ENCODE measurements at regions of chr1 and their contacts with region 1.

Region 1: GRCh38 chr1:65459397-65459768 is 38.9 kb downstream of the LEPR start:
- DNase-seq: no peak
- H3K4me3 ChIP-seq: no peak overlapping the region
- H3K27ac ChIP-seq: no peak overlapping the region
- H3K4me1 ChIP-seq: peaks cover 0 to 4% (median 1%) of the 10 kb centered on the region in 4 experiments; a peak in 2 of 7 replicates
- H3K27me3 ChIP-seq: no peaks in the 10 kb centered on the region
- CTCF ChIP-seq: peak in 2 of 3 experiments; percentile 62 to 74; a peak in 3 of 4 replicates
- EP300 ChIP-seq: no peak
- POLR2A ChIP-seq: no peak
- RAD21 ChIP-seq: peak; percentile 70 to 80

Region 2: DNA sequence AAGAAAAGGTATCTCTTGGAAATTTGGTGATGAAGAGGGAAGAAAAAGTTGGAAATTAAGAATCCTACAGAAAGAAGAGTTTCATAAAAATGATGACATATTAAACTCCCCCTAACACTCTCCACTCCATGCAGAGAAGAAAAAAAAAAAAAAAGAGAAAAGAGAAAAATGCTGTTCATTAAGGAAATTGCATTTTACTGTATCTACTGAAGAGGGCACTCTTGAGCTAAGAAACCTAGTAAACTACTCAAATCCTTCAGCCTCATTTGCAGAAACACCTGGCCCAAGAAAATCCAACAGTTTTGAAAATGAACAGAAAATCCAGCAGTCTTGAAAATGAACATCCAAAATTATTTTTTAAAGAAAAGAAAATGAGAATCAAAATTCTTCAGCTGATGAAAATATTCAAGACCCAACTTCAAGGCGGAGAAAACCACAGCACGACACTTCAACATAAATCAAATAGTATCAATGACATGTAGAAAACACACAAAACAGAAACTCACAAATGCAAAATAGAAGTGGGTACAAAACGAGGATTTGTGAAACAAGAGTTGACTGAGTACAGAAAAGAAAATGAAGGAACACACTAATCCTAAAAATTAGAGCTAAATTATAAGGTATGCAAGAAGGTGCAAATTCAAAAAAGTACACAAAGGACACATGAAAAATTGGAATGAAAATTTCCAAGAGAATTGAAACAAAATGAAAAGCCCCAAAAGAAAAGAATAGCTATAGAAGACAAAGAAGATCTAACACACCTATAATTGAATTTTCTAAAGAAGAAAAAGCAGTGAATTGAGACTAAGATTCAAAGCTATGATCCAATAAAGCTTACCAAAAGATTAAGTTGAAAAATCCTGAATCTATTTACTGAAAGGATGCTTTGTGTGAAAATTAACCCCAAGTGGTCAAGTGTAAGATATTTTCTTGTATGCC is 223.2 kb before region 1 on chr1:
- CTCF ChIA-PET with region 1: interaction called, 19 read pairs
- POLR2A ChIA-PET with region 1: no interaction called
- DNase-seq: no peak
- H3K4me3 ChIP-seq: no peak overlapping the region
- H3K27ac ChIP-seq: no peak overlapping the region
- H3K4me1 ChIP-seq: no peaks in the 10 kb centered on the region
- H3K27me3 ChIP-seq: no peaks in the 10 kb centered on the region
- CTCF ChIP-seq: peak in 2 of 3 experiments; percentile 55 to 65; a peak in 3 of 4 replicates
- EP300 ChIP-seq: no peak
- POLR2A ChIP-seq: no peak
- RAD21 ChIP-seq: peak; percentile 87 to 88

Region 3: GRCh38 chr1:65309304-65310077 is 149.9 kb before region 1 on chr1 and contains the start of gene DNAJC6:
- CTCF ChIA-PET with region 1: interaction called, 10 read pairs
- POLR2A ChIA-PET with region 1: no interaction called
- DNase-seq: peak; percentile 44 to 93
- H3K4me3 ChIP-seq: peak within 1 kb of the TSS; percentile 61 to 88 (median 64)
- H3K27ac ChIP-seq: no peak within 1 kb of the TSS
- H3K4me1 ChIP-seq: peaks cover 0 to 6% (median 2%) of the 10 kb centered on the region in 4 experiments; a peak in 3 of 7 replicates
- H3K27me3 ChIP-seq: peaks cover 0 to 10% (median 0%) of the 10 kb centered on the region in 4 experiments; a peak in 2 of 7 replicates
- CTCF ChIP-seq: no peak
- EP300 ChIP-seq: peak in 1 of 2 experiments; percentile 27; a peak in 1 of 3 replicates
- POLR2A ChIP-seq: no peak
- RAD21 ChIP-seq: 0 out of 4 replicates have a peak, but pooled peaks of 1 of the 2 experiments have one; percentile 8
- total RNA-seq, gene DNAJC6: 3.0 and 3.7 TPM in 2 replicates

Region 4: DNA sequence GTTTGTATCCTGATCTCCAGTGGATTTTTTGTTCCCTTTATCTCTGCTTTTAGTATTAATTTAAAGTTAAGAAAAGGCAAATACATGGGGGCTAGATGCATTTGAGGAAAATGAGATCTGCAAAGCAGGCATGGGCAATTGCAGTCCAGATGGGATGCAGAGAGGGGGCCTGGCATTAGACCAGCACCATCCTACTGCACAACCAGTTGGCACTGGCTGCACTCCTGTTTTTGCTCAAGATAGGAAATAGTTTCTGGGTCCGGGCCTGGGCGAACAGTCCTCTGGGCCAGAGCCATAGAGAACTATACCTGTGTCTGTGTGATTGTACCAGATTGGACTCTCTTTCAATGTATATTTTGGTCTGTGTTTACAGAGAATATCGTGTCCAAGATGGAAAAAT is 72.9 kb before region 1 on chr1:
- CTCF ChIA-PET with region 1: no interaction called
- POLR2A ChIA-PET with region 1: no interaction called
- DNase-seq: no peak
- H3K4me3 ChIP-seq: no peak overlapping the region
- H3K27ac ChIP-seq: no peak overlapping the region
- H3K4me1 ChIP-seq: no peaks in the 10 kb centered on the region
- H3K27me3 ChIP-seq: no peaks in the 10 kb centered on the region
- CTCF ChIP-seq: no peak
- EP300 ChIP-seq: no peak
- POLR2A ChIP-seq: no peak
- RAD21 ChIP-seq: no peak

Region 5: DNA sequence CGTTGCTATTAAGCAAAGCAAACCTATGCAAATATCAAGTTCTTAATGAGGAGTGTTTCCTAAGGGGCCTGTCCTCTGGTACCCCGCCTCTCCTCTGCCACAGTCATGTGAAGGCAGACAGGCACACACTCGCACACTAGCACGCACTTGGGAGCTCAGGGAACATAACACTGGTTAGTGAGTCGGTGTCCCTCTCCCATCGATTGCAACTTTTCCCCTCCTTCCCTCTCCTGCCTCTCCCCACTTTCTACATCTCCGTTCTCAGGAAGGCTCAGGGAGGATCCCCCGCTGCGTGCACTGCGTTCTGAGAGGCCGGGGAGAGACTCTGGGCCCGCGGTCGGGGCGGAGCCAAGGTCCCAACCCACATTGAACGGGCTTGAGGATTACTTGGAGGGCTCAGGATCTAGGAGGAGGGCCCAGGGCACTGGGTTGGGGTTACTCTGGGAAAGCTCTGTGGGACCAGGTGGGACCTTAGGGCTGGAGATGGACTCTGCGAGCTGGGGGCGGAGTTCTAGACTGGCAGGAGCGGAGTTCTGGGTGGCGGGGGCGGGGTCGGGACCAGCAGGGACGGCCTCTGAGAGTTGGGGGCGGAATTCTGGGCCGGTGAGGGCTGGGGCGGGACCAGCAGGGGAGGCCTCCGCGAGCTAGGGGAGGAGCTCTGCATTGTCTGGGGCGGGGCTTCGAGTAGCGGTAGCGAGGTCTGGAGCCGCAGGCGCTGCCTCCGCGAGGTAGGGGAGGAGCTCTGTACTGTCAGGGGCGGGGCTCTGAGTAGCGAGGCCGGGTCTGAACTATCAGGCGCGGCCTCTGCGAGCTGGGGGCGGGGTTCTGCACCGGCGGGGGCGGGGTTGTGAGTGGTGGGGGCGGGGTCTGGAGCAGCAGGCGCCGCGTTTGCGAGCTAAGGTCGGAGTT is 39.4 kb before region 1 on chr1:
- CTCF ChIA-PET with region 1: interaction called, 10 read pairs
- POLR2A ChIA-PET with region 1: no interaction called
- DNase-seq: peak; percentile 91 to 98
- H3K4me3 ChIP-seq: peak overlapping the region; percentile 81 to 94 (median 87)
- H3K27ac ChIP-seq: peak overlapping the region; percentile 46; the same call in 1 of the 2 replicates
- H3K4me1 ChIP-seq: peaks cover 0 to 18% (median 10%) of the 10 kb centered on the region in 4 experiments; a peak in 5 of 7 replicates
- H3K27me3 ChIP-seq: no peaks in the 10 kb centered on the region
- CTCF ChIP-seq: peak in 1 of 3 experiments; percentile 6; a peak in 1 of 4 replicates
- EP300 ChIP-seq: no peak
- POLR2A ChIP-seq: 0 out of 3 replicates have a peak, but pooled peaks of 1 of the 2 experiments have one; percentile 31
- RAD21 ChIP-seq: peak in 1 of 2 experiments; percentile 22; a peak in 1 of 4 replicates

Region 6: GRCh38 chr1:65431111-65431705 is 28.2 kb before region 1 on chr1:
- CTCF ChIA-PET with region 1: interaction called, 58 read pairs
- POLR2A ChIA-PET with region 1: interaction called, 3 read pairs
- DNase-seq: no peak
- H3K4me3 ChIP-seq: no peak overlapping the region
- H3K27ac ChIP-seq: no peak overlapping the region
- H3K4me1 ChIP-seq: peaks cover 2 to 14% (median 9%) of the 10 kb centered on the region in 4 experiments; a peak in 5 of 7 replicates
- H3K27me3 ChIP-seq: no peaks in the 10 kb centered on the region
- CTCF ChIP-seq: peak in 2 of 3 experiments; percentile 40 to 58; a peak in 2 of 4 replicates
- EP300 ChIP-seq: no peak
- POLR2A ChIP-seq: no peak
- RAD21 ChIP-seq: peak; percentile 70 to 74

Region 7: DNA sequence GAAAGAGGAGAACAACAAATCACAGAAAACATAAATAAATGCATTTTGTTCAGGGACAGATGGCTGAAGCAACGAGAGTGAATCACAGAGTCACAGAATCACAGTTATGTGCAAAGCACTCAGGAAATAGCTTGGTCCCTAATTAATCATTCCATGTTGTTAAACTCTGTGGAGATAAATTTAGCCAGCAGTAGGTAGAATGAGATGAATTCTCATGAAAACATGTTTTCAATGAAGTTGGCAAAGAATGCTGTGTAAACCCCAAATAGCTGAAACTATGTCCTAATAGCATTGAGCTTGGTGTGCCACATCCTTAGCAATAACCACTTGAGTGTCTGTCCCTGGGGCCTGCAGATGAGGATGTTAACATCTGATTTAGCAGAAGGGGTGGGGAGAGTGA is 18.5 kb before region 1 on chr1:
- CTCF ChIA-PET with region 1: interaction called, 27 read pairs
- POLR2A ChIA-PET with region 1: interaction called, 3 read pairs
- DNase-seq: no peak
- H3K4me3 ChIP-seq: no peak overlapping the region
- H3K27ac ChIP-seq: no peak overlapping the region
- H3K4me1 ChIP-seq: peaks cover 0 to 11% (median 7%) of the 10 kb centered on the region in 4 experiments; a peak in 5 of 7 replicates
- H3K27me3 ChIP-seq: no peaks in the 10 kb centered on the region; a peak in 1 of 7 replicates
- CTCF ChIP-seq: no peak
- EP300 ChIP-seq: no peak
- POLR2A ChIP-seq: no peak
- RAD21 ChIP-seq: no peak

Region 8: DNA sequence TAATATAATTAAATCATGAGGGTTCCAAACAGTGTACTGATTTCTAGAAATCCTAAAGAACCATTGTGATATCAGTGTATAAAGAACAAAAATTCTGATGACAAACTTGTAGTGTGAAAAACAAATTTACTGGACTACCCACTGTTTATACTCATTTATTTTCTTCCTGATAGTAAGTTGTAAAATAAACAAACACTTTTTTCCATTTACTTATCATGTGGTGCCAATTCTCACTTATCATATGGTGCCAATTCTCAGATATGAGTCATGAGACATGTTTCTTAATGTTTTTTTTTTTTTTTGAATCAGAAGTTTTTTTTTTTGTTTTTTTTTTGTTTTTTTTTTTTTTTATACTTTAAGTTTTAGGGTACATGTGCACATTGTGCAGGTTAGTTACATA is 98.8 kb after region 1 on chr1:
- CTCF ChIA-PET with region 1: no interaction called
- POLR2A ChIA-PET with region 1: no interaction called
- DNase-seq: no peak
- H3K4me3 ChIP-seq: no peak overlapping the region
- H3K27ac ChIP-seq: no peak overlapping the region
- H3K4me1 ChIP-seq: no peaks in the 10 kb centered on the region
- H3K27me3 ChIP-seq: no peaks in the 10 kb centered on the region
- CTCF ChIP-seq: no peak
- EP300 ChIP-seq: no peak
- POLR2A ChIP-seq: no peak
- RAD21 ChIP-seq: no peak